Ascending aorta (tissue), 2 donors: ENCODE measurements at regions of chr1 and their contacts with region 1.

Region 1: GRCh38 chr1:25572708-25573600 is 29.5 kb downstream of the LDLRAP1 start:
- DNase-seq: no peak
- H3K4me3 ChIP-seq: no peak overlapping the region
- H3K27ac ChIP-seq: no peak overlapping the region
- H3K4me1 ChIP-seq: peaks cover 0 to 24% of the 10 kb centered on the region in 2 donors
- H3K27me3 ChIP-seq: no peaks in the 10 kb centered on the region
- CTCF ChIP-seq: peak; percentile 42 to 78 (median 66)

Region 2: DNA sequence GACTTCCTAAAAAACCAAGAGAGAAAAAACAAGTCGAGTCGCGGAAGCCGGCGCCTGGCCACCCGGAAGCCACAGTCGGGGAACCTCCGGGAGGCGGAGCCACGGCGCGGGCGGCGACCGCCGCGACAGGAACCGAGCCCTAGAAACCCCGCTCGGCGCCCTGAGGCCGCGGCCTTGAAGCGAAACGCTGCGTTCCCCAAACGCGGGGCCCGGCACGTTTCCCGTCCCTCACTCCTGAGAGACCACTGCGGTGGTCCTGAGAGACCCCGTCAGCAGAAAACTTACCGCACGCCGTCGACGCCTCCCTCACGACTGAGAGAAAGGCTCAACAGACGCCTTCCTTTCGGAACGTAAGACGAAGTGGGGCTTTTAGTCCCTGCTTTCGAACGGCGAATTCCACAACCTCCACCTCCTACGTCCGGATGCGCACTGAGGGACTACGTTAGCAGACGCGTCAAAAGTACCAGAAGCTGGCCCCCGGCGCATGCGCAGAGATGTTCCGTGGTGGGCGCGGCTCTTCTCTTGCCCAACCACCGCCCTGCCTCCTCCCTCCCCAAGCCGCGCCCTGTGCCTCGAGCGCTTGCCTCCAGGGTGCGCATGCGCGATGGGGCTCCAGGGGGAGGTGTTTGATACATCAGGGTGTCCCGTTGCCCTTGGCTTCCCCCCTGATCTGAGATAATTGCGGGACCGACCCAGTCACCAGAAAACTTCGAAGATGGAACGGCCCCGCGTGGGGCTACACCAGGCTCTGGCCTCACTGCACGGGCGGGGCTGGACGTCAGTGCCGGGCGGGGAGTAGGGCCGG is 325.7 kb before region 1 on chr1 and contains the start of gene RSRP1:
- intact Hi-C with region 1: no loop called
- DNase-seq: peak; percentile 97 to 100
- H3K4me3 ChIP-seq: peak within 1 kb of the TSS; percentile 69 to 99
- H3K27ac ChIP-seq: peak within 1 kb of the TSS; percentile 96 to 100
- H3K4me1 ChIP-seq: peaks cover 10 to 22% of the 10 kb centered on the region in 2 donors
- H3K27me3 ChIP-seq: no peaks in the 10 kb centered on the region
- CTCF ChIP-seq: peak in 1 of 3 experiments; percentile 26
- total RNA-seq, gene RSRP1: 126 TPM

Region 3: GRCh38 chr1:25513666-25514065 is 59.3 kb before region 1 on chr1:
- intact Hi-C with region 1: no loop called
- DNase-seq: no peak
- H3K4me3 ChIP-seq: no peak overlapping the region
- H3K27ac ChIP-seq: no peak overlapping the region
- H3K4me1 ChIP-seq: no peaks in the 10 kb centered on the region
- H3K27me3 ChIP-seq: no peaks in the 10 kb centered on the region
- CTCF ChIP-seq: no peak

Region 4: DNA sequence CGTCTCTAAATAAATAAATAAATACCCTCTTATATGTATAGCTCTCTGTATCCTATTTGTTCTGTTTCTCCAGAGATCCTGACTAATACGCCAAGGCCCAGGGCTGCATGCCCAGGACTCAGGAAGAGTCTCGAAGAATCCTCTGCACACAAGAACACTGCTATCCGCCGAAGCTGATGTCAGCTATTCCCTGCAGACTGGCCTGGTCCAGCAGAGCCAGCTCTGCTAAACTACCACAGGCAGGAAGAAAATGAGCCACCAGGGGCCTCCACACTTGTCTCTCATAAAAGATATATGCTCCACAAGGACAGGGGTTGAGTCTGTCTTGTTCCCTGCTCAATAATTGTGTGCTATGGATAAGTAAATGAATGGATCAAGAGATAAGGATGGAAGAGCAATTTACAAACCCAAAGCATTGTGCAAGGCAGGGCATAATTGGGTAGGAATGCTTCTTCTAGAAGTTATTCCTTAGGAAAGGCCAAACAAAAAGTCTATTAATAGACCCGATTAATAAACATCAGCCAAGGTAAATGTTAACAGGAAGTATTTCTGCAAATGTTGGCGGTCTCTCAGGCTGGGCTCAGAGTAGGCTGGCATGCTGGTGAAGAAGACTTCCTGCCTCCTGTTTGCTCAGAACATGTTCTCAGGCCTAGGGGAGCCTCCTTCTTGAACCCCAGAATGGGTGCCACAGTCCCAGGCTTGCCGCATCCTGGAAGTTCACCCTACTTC is 17.3 kb after region 1 on chr1:
- intact Hi-C with region 1: loop called (anchors 1 kb)
- DNase-seq: peak in 1 of 2 donors; percentile 81
- H3K4me3 ChIP-seq: no peak overlapping the region
- H3K27ac ChIP-seq: peak overlapping the region; percentile 69 to 86
- H3K4me1 ChIP-seq: peaks cover 15 to 27% of the 10 kb centered on the region in 2 donors
- H3K27me3 ChIP-seq: no peaks in the 10 kb centered on the region
- CTCF ChIP-seq: peak in 1 of 3 experiments; percentile 33